Naive thymus-derived CD4-positive, alpha-beta T cell (primary cell): ENCODE measurements at regions of chr9 and their contacts with region 1.

Region 1: DNA sequence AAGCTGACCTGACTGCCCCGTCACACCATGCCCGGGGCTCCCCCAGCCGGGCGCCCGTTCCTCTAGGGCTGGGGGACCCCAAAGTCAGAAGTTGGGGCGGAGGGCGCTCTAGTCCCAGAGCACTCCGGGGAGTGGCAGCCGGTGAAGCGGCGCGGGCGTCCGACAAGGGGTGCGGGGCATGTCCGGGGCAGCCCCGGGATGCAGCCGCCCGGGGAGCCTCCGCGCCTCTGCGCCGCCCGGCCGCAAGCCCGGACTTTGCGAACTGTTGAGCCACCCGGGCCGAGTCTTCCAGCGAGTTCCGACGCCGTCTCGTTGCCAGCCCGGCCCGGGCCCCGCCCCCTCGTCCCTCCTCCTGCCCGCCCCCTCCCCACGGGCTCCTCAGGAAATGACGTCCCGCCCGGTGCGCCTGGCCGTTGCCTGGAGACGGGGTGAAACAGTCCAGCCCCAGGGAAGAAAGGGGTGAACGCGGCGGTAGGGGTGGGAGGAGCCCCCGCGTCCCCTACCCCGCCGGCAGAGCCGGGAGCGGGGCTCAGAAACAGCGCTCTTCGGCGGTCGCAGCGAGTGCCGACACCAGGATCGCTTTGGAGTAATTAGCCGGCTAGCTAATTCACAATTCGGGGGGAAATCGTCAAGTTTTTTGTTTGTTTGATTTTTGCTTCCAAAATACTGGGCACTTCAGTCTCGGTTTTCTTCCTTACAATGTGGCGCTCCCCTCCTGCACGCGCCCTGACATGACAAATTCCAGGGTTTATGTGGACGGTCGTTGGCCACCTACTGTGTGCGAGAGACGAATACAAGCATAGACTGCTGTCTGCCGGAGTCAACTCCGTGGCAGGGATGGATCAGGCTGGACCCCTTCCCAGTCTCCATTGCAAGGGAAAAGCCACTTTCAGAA is at the start of gene WHRN:
- DNase-seq: peak; percentile 80 to 94 (median 89)
- ATAC-seq: peak; percentile 95
- H3K4me3 ChIP-seq: peak within 1 kb of the TSS; percentile 59
- H3K4me3 Mint-ChIP-seq: peak within 1 kb of the TSS; percentile 83 to 90 (median 88)
- H3K27ac ChIP-seq: peak within 1 kb of the TSS; percentile 57
- H3K27ac Mint-ChIP-seq: peak within 1 kb of the TSS; percentile 55 to 94 (median 87)
- H3K4me1 ChIP-seq: peaks cover 14 to 29% of the 10 kb centered on the region in 2 donors
- H3K4me1 Mint-ChIP-seq: peaks cover 5 to 26% (median 22%) of the 10 kb centered on the region in 7 donors
- H3K27me3 ChIP-seq: no peaks in the 10 kb centered on the region
- H3K27me3 Mint-ChIP-seq: peaks cover 0 to 86% (median 33%) of the 10 kb centered on the region in 5 donors
- total RNA-seq, gene WHRN: 1.1 to 24.0 (median 3.0) TPM

Region 2: DNA sequence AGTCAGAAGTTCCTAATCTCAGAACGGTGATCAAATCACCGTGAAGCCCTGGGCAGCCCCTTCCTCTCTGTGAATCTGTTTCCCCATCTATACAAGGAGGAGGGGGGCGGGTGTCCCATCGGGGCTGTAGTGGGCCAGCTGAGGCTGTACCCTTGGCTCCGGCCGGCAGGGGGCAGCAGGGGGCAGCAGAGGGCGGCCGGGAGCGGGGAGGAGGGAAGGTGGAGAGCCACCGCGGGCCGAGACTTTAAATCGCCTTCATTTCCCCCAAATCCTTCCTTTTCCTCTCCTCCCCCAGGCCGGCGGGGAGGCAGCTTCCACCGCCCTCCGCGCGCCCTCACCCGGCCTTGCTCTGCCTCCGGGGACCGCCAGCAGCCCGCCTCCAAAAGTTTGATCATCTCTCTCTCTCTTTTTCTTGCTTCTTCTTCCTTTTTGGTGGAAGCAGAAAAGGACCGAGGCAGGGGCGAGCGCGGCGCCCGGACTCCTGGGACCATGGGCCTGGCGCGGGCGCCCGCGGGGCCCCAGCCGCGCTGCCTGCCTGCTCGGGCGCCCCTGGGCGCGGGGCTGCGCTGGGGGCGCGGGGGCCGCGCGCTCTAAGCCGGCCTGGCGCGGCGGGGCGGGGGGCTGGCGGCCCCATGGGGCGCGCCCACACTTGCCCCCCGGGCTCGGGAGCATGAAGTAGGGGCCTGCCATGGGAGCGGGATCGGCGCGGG is 350.0 kb before region 1 on chr9 and contains the start of gene COL27A1:
- CTCF ChIA-PET with region 1: no interaction called
- POLR2A ChIA-PET with region 1: no interaction called
- intact Hi-C with region 1: loop called in 1 of 2 experiments (anchors 10 kb)
- DNase-seq: peak; percentile 38 to 90 (median 71)
- ATAC-seq: peak; percentile 91
- H3K4me3 ChIP-seq: peak within 1 kb of the TSS; percentile 40
- H3K4me3 Mint-ChIP-seq: peak within 1 kb of the TSS; percentile 88 to 98 (median 91)
- H3K27ac ChIP-seq: no peak within 1 kb of the TSS
- H3K27ac Mint-ChIP-seq: peak within 1 kb of the TSS in 7 of 9 donors; percentile 24 to 66 (median 62)
- H3K4me1 ChIP-seq: peaks cover 0 to 13% of the 10 kb centered on the region in 2 donors
- H3K4me1 Mint-ChIP-seq: peaks cover 15 to 32% (median 24%) of the 10 kb centered on the region in 7 donors
- H3K27me3 ChIP-seq: peaks cover 0 to 4% of the 10 kb centered on the region in 2 donors
- H3K27me3 Mint-ChIP-seq: peaks cover 31 to 54% (median 45%) of the 10 kb centered on the region in 5 donors
- total RNA-seq, gene COL27A1: 1.2 to 2.4 (median 1.9) TPM

Region 3: GRCh38 chr9:114397848-114398605 is 107.4 kb before region 1 on chr9:
- CTCF ChIA-PET with region 1: no interaction called
- POLR2A ChIA-PET with region 1: interaction called, 3 read pairs
- intact Hi-C with region 1: loop called (anchors 1 kb)
- DNase-seq: peak; percentile 91 to 96 (median 94)
- ATAC-seq: peak; percentile 94
- H3K4me3 ChIP-seq: peak overlapping the region; percentile 98
- H3K4me3 Mint-ChIP-seq: peak overlapping the region; percentile 86 to 99 (median 96)
- H3K27ac ChIP-seq: peak overlapping the region; percentile 97
- H3K27ac Mint-ChIP-seq: peak overlapping the region; percentile 88 to 99 (median 97)
- H3K4me1 ChIP-seq: peaks cover 26 to 44% of the 10 kb centered on the region in 2 donors
- H3K4me1 Mint-ChIP-seq: peaks cover 40 to 48% (median 46%) of the 10 kb centered on the region in 7 donors
- H3K27me3 ChIP-seq: no peaks in the 10 kb centered on the region
- H3K27me3 Mint-ChIP-seq: no peaks in the 10 kb centered on the region

Region 4: GRCh38 chr9:114434878-114435311 is 70.5 kb before region 1 on chr9:
- CTCF ChIA-PET with region 1: interaction called, 4 read pairs
- POLR2A ChIA-PET with region 1: no interaction called
- intact Hi-C with region 1: loop called (anchors 1 to 2 kb)
- DNase-seq: peak in 4 of 9 donors; percentile 9 to 20 (median 15)
- ATAC-seq: no peak
- H3K4me3 ChIP-seq: no peak overlapping the region
- H3K4me3 Mint-ChIP-seq: no peak overlapping the region
- H3K27ac ChIP-seq: no peak overlapping the region
- H3K27ac Mint-ChIP-seq: no peak overlapping the region
- H3K4me1 ChIP-seq: no peaks in the 10 kb centered on the region
- H3K4me1 Mint-ChIP-seq: peaks cover 0 to 5% (median 4%) of the 10 kb centered on the region in 7 donors
- H3K27me3 ChIP-seq: no peaks in the 10 kb centered on the region
- H3K27me3 Mint-ChIP-seq: peaks cover 0 to 16% (median 0%) of the 10 kb centered on the region in 5 donors

Region 5: GRCh38 chr9:114487607-114488300 is 17.7 kb before region 1 on chr9:
- CTCF ChIA-PET with region 1: interaction called, 8 read pairs
- POLR2A ChIA-PET with region 1: no interaction called
- intact Hi-C with region 1: loop called (anchors 1 kb)
- DNase-seq: peak; percentile 25 to 80 (median 62)
- ATAC-seq: peak; percentile 92
- H3K4me3 ChIP-seq: no peak overlapping the region
- H3K4me3 Mint-ChIP-seq: no peak overlapping the region
- H3K27ac ChIP-seq: no peak overlapping the region
- H3K27ac Mint-ChIP-seq: peak overlapping the region in 2 of 9 donors; percentile 8 to 57
- H3K4me1 ChIP-seq: peaks cover 0 to 9% of the 10 kb centered on the region in 2 donors
- H3K4me1 Mint-ChIP-seq: peaks cover 0 to 30% (median 0%) of the 10 kb centered on the region in 7 donors
- H3K27me3 ChIP-seq: no peaks in the 10 kb centered on the region
- H3K27me3 Mint-ChIP-seq: peaks cover 0 to 4% (median 0%) of the 10 kb centered on the region in 5 donors

Region 6: DNA sequence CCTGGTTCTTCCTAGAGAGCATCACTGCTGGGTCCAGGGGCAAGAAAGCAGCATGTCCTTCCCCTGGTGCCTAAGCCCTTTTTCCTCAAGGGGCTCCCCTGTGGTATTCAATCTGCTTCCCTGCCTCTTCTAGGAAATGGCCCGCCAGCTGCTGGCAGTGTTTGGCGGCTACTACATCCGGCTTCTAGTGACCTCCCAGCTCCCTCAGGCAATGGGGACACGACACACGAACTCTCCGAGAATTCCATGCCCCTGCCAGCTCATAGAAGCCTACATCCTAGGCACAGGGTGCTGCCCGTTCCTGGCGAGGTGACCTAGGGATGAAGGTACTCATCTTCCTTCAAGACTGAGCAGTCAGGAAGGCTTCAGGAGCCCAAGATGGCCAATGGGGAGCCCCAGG is 137.6 kb after region 1 on chr9:
- CTCF ChIA-PET with region 1: no interaction called
- POLR2A ChIA-PET with region 1: no interaction called
- intact Hi-C with region 1: no loop called
- DNase-seq: no peak
- ATAC-seq: no peak
- H3K4me3 ChIP-seq: no peak overlapping the region
- H3K4me3 Mint-ChIP-seq: no peak overlapping the region
- H3K27ac ChIP-seq: no peak overlapping the region
- H3K27ac Mint-ChIP-seq: peak overlapping the region in 1 of 9 donors; percentile 18
- H3K4me1 ChIP-seq: no peaks in the 10 kb centered on the region
- H3K4me1 Mint-ChIP-seq: peaks cover 0 to 7% (median 0%) of the 10 kb centered on the region in 7 donors
- H3K27me3 ChIP-seq: no peaks in the 10 kb centered on the region
- H3K27me3 Mint-ChIP-seq: no peaks in the 10 kb centered on the region

Region 7: DNA sequence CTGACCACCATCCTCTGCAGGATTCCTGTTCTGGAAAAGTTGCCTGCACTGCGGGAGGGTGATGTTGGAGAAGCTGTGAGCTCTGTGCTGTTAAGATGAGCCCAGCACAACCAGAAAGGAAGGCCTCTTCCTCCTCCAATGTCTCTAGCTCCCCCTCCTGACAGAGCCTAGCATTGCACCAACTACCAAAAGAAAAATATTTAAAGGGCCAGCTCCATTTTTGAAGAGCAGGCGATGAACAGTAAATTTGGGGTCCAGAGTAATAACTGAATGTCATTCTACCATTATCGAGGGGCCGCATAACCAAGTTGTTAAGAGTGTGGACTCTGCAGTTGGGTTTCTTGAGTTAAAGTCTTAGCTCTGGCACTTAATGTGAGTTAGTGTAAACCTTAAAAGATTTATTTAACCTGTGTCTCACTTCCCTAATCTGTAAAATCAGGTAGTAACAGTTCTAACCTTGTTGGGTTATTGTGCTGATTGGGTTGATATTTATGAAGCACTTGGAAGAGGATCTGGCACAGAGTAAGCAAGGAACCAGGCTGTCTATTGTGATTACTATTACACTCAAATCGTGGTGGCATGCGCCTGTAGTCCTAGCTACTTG is 148.2 kb after region 1 on chr9:
- CTCF ChIA-PET with region 1: interaction called, 13 read pairs
- POLR2A ChIA-PET with region 1: interaction called, 3 read pairs
- intact Hi-C with region 1: loop called in 1 of 2 experiments (anchors 1 kb)
- DNase-seq: peak; percentile 56 to 88 (median 81)
- ATAC-seq: peak; percentile 99
- H3K4me3 ChIP-seq: no peak overlapping the region
- H3K4me3 Mint-ChIP-seq: no peak overlapping the region
- H3K27ac ChIP-seq: no peak overlapping the region
- H3K27ac Mint-ChIP-seq: peak overlapping the region in 7 of 9 donors; percentile 16 to 81 (median 56)
- H3K4me1 ChIP-seq: peaks cover 0 to 23% of the 10 kb centered on the region in 2 donors
- H3K4me1 Mint-ChIP-seq: peaks cover 11 to 25% (median 21%) of the 10 kb centered on the region in 7 donors
- H3K27me3 ChIP-seq: no peaks in the 10 kb centered on the region
- H3K27me3 Mint-ChIP-seq: no peaks in the 10 kb centered on the region